PC-3 (cell line): ENCODE measurements at regions of chr4 and their contacts with region 1.

Region 1: GRCh38 chr4:83334425-83335241 is at the start of gene HPSE:
- DNase-seq: peak; percentile 76
- ATAC-seq: peak; percentile 93
- H3K4me3 ChIP-seq: peak within 1 kb of the TSS; percentile 78
- H3K27ac ChIP-seq: no peak within 1 kb of the TSS
- H3K4me1 ChIP-seq: peaks cover 20% of the 10 kb centered on the region; the same call in 1 of the 2 replicates
- H3K27me3 ChIP-seq: no peaks in the 10 kb centered on the region
- CTCF ChIP-seq: no peak
- total RNA-seq, gene HPSE: 4.2 and 9.1 TPM in 2 replicates

Region 2: GRCh38 chr4:83083925-83084475 is 250.6 kb before region 1 on chr4:
- CTCF ChIA-PET with region 1: no interaction called
- POLR2A ChIA-PET with region 1: interaction called, 11 read pairs
- intact Hi-C with region 1: no loop called
- DNase-seq: no peak
- ATAC-seq: peak; percentile 22; the same call in 1 of the 2 replicates
- H3K4me3 ChIP-seq: no peak overlapping the region
- H3K27ac ChIP-seq: no peak overlapping the region
- H3K4me1 ChIP-seq: peaks cover 10% of the 10 kb centered on the region
- H3K27me3 ChIP-seq: no peaks in the 10 kb centered on the region
- CTCF ChIP-seq: no peak

Region 3: DNA sequence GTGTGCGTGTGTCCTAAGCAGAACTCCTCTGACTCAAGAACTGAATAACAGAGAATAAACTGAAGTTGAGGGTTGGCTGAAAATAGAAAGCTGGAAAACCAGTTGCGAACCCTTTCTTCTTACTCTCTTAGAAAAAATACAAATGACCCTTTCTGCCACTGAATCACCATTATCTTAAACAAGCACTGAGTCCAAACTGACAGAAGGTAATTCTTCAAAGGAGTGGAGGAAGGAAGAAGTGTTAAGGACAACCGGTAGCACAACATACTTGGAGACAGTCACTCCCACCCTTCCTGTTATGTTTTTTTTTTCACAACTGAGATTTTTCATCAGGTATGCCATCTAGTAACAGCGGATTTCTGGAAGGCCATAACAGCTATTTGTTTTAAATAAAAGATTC is 82.9 kb after region 1 on chr4:
- CTCF ChIA-PET with region 1: no interaction called
- POLR2A ChIA-PET with region 1: interaction called, 10 read pairs
- intact Hi-C with region 1: no loop called
- DNase-seq: no peak
- ATAC-seq: no peak
- H3K4me3 ChIP-seq: no peak overlapping the region
- H3K27ac ChIP-seq: no peak overlapping the region
- H3K4me1 ChIP-seq: no peaks in the 10 kb centered on the region
- H3K27me3 ChIP-seq: no peaks in the 10 kb centered on the region
- CTCF ChIP-seq: no peak